Heart right ventricle (tissue), 16 donors: ENCODE measurements at regions of chr1 and their contacts with region 1.

Region 1: DNA sequence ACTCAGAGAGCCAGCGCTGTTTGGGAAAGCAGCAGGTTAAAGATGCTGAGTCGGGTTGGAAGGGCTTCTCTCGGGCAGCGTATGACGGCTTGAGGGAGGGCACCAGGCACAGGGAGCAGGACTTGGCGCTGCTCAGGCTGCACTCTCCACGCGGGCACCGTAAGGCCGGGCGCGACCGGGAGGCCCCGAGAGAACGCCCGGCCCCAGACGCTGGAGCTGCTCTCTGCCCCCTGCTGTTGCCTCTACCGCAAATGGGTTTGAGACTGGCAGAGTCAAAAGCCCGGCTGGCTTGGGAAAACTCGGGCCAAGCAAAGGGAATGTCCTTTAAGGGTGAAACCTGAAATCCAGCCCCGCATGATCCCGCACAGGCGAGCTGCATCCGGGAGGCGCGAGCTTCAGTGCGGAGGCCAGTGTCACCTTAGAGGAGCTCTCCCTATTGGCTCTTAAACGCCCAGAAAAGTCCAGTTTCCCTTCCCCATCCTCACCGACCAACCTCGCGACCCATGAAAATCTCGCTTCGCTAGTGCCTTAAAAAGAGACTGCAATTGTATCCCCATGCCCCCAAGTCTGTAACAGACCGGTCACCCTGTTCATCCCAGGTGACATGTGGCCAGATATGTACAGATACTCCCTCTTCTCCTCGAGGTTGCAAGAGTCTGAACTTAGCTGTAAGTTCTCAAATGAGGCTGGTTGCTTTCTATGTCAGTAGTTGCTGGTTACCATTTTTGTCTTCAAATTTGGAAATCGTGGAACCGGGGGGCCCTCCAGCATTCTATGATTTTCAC is 1.1 kb downstream of the PRRX1 start:
- DNase-seq: peak in 1 of 2 donors; percentile 61
- ATAC-seq: peak; percentile 41 to 87 (median 69)
- H3K4me3 ChIP-seq: peak overlapping the region; percentile 54 to 87 (median 70)
- H3K27ac ChIP-seq: peak overlapping the region; percentile 90 to 98 (median 94)
- H3K4me1 ChIP-seq: peaks cover 2 to 53% (median 20%) of the 10 kb centered on the region in 9 donors
- H3K27me3 ChIP-seq: peaks cover 0 to 100% (median 25%) of the 10 kb centered on the region in 7 donors
- CTCF ChIP-seq: peak in 6 of 9 donors; percentile 9 to 44 (median 30)

Region 2: DNA sequence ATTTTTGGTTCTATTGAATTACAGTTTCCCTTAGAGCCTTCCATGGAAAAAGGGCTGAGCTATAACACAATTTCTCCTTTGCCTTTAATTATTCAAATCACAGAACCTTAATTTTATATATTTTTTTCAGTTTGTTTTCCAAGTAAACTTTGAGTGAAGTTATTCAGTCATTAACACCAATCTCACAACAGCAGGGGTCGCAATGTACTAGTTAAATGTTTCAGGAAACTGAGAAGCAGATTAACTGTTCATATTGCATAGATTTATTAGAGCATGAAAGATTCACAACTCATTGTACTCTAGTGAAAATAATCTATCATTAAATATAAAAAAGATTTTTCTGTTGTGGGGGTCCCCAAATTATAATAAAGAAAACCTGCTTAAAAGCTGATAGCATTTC is 654.6 kb before region 1 on chr1:
- intact Hi-C with region 1: loop called in 3 of 10 experiments (anchors 10 kb)
- DNase-seq: peak in 1 of 2 donors; percentile 64
- ATAC-seq: no peak
- H3K4me3 ChIP-seq: no peak overlapping the region
- H3K27ac ChIP-seq: no peak overlapping the region
- H3K4me1 ChIP-seq: no peaks in the 10 kb centered on the region
- H3K27me3 ChIP-seq: no peaks in the 10 kb centered on the region
- CTCF ChIP-seq: peak in 8 of 9 donors; percentile 26 to 73 (median 56)

Region 3: DNA sequence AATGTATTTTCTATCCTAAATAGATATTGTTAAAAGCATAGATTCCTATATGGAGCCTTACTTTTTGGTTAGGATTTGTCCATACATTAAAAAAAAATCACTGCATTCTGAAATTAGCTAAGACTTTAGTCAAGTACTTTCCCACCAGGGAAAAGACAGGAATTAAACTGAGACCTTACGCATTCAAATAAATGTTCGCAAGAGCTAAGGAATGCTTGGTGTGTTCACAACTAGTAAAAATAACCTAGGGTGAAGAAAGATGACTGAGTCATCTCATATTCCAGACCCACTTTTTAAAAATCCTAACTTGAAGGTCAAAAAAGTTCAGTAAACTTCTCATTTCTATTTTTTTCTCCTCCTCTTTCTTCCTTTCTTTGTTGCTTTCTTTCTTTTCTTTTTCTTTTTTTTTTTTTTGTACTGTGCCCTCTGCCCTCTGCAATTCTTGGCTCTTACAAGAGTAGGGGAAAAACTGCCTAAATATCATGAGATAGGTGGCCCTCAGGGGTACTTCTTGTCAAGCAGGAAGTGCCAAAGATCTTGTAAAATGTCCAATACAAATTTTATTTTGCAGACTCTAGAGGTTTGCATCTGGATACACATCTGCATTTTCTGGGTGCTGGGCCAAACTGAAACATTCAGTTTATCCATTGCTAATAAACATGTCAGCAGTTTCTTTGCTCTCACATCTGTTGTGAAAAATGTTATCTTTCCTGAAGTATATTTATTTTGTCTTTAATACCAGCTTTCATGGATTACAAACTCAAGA is 254.4 kb before region 1 on chr1:
- intact Hi-C with region 1: loop called in 2 of 10 experiments (anchors 10 kb)
- DNase-seq: no peak
- ATAC-seq: peak in 7 of 8 donors; percentile 73 to 94 (median 86)
- H3K4me3 ChIP-seq: no peak overlapping the region
- H3K27ac ChIP-seq: peak overlapping the region in 7 of 10 donors; percentile 53 to 80 (median 65)
- H3K4me1 ChIP-seq: peaks cover 0 to 40% (median 21%) of the 10 kb centered on the region in 9 donors
- H3K27me3 ChIP-seq: no peaks in the 10 kb centered on the region
- CTCF ChIP-seq: no peak

Region 4: GRCh38 chr1:170537798-170538503 is 127.1 kb before region 1 on chr1:
- intact Hi-C with region 1: loop called in 7 of 10 experiments (anchors 5 to 10 kb)
- DNase-seq: no peak
- ATAC-seq: peak in 6 of 8 donors; percentile 34 to 82 (median 74)
- H3K4me3 ChIP-seq: no peak overlapping the region
- H3K27ac ChIP-seq: peak overlapping the region in 8 of 10 donors; percentile 34 to 82 (median 63)
- H3K4me1 ChIP-seq: peaks cover 0 to 45% (median 37%) of the 10 kb centered on the region in 9 donors
- H3K27me3 ChIP-seq: no peaks in the 10 kb centered on the region
- CTCF ChIP-seq: no peak

Region 5: GRCh38 chr1:170729225-170730002 is 64.4 kb after region 1 on chr1:
- intact Hi-C with region 1: loop called in 2 of 10 experiments (anchors 5 to 10 kb)
- DNase-seq: peak in 1 of 2 donors; percentile 26
- ATAC-seq: peak; percentile 70 to 96 (median 90)
- H3K4me3 ChIP-seq: no peak overlapping the region
- H3K27ac ChIP-seq: peak overlapping the region; percentile 12 to 81 (median 70)
- H3K4me1 ChIP-seq: peaks cover 5 to 62% (median 34%) of the 10 kb centered on the region in 9 donors
- H3K27me3 ChIP-seq: no peaks in the 10 kb centered on the region
- CTCF ChIP-seq: no peak

Region 6: GRCh38 chr1:170881268-170882265 is 216.5 kb after region 1 on chr1:
- intact Hi-C with region 1: loop called in 7 of 10 experiments (anchors 5 to 10 kb)
- DNase-seq: peak in 1 of 2 donors; percentile 9
- ATAC-seq: peak in 6 of 8 donors; percentile 60 to 72 (median 70)
- H3K4me3 ChIP-seq: peak overlapping the region in 6 of 10 donors; percentile 8 to 40 (median 22)
- H3K27ac ChIP-seq: peak overlapping the region in 1 of 10 donors; percentile 27
- H3K4me1 ChIP-seq: peaks cover 0 to 12% (median 0%) of the 10 kb centered on the region in 9 donors
- H3K27me3 ChIP-seq: no peaks in the 10 kb centered on the region
- CTCF ChIP-seq: peak in 8 of 9 donors; percentile 50 to 80 (median 67)